PC-9 (cell line): ENCODE measurements at regions of chr2 and their contacts with region 1.

Region 1: GRCh38 chr2:42931146-42931817 is 138.9 kb upstream of the HAAO start:
- DNase-seq: no peak
- H3K4me3 ChIP-seq: no peak overlapping the region
- H3K27ac ChIP-seq: no peak overlapping the region
- H3K4me1 ChIP-seq: no peaks in the 10 kb centered on the region
- H3K27me3 ChIP-seq: no peaks in the 10 kb centered on the region
- CTCF ChIP-seq: no peak; the same call in 1 of the 2 replicates

Region 2: GRCh38 chr2:42844901-42845821 is 86.1 kb before region 1 on chr2:
- CTCF ChIA-PET with region 1: interaction called, 17 read pairs
- POLR2A ChIA-PET with region 1: no interaction called
- intact Hi-C with region 1: no loop called
- DNase-seq: no peak
- H3K4me3 ChIP-seq: no peak overlapping the region
- H3K27ac ChIP-seq: no peak overlapping the region
- H3K4me1 ChIP-seq: no peaks in the 10 kb centered on the region
- H3K27me3 ChIP-seq: no peaks in the 10 kb centered on the region
- CTCF ChIP-seq: no peak

Region 3: DNA sequence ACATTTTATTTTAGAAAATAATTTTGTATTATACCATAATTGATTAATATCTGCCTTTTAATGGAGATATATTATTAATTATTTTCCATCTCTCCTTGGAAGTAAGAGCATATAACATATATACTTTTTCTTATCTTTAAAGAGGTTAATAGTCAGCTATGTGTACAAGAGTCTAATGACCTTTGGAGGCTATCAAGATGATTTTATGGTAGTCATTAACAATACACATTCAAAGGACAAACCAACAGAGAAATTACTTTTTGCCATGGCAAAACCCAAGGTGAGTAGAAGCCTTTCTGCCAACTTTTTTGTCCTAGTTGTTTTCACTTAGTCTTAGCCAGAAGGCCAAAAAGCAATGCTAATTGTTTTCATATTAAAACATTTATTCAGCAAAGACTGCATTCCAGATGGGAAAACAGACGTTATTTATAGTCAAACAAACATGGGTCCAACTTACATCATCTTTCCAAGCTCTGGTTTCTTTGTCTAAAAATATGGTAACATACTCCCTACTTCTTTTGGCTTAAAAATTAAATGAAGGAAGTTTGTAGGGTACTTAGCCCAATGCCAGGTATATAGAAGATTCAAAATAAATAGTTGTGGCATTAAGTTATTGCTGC is 832.9 kb after region 1 on chr2:
- CTCF ChIA-PET with region 1: no interaction called
- POLR2A ChIA-PET with region 1: no interaction called
- intact Hi-C with region 1: no loop called
- DNase-seq: no peak
- H3K4me3 ChIP-seq: no peak overlapping the region
- H3K27ac ChIP-seq: no peak overlapping the region
- H3K4me1 ChIP-seq: peaks cover 32% of the 10 kb centered on the region
- H3K27me3 ChIP-seq: no peaks in the 10 kb centered on the region
- CTCF ChIP-seq: no peak